Sigmoid colon (tissue), 7 donors: ENCODE measurements at regions of chr5 and their contacts with region 1.

Region 1: DNA sequence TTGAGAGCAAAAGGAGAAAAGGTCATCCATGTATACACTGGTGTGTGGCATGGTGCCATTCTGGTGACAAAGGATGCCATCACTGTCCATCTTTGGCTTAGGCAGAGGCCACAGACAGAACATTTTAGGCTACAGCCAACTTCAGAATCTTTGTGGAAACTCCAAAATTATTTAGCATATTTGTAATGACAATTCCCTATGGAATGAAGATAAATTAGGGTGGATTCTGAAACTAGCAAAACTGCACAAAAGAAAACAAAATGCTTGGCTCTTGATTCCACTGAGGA is 92.5 kb downstream of the FBXW11 start:
- DNase-seq: no peak
- H3K4me3 ChIP-seq: no peak overlapping the region
- H3K27ac ChIP-seq: no peak overlapping the region
- H3K4me1 ChIP-seq: peaks cover 0 to 29% (median 18%) of the 10 kb centered on the region in 4 donors
- H3K27me3 ChIP-seq: no peaks in the 10 kb centered on the region
- CTCF ChIP-seq: no peak
- EP300 ChIP-seq: no peak
- POLR2A ChIP-seq: no peak

Region 2: DNA sequence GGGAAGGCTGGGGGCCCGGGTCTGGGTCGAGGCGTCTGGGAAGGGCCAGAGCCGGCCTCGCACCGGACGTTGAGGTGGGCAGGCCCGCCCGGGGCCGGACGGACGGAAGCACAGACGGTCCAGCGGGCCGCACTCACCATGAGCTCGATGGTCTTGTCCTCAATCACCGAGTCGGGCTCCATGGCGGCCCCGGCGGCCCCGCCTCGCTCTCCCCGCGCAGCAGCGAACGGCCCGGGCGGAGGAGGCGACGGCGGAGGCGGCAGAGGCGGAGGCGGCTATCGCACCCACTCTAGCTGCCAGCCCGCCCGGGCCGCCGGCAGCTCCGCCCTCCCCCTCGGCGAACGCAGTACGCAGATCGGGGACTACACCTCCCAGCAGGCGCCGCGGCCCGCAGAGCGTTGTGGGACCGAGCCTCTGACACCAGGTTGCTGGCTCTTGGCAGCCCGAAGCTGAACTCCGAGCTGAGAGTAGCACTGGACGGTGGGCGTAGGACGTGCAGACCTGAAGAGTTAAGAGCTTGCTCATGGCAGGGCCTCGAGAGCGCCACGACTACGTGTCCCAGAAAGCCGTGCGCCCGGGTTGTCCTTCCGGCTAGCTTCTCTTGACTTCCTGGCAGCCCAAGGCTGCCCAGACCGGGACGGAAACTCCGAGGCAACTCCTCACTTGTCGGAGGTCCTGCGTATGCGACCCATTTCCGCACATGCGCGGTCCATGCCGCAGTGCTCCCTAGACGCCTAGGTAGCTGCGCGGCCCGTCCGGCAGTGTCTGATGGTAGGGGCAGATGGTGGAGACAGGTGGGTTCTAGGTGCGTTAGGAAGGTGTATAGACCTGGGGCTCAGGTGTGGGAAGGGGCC is 92.6 kb after region 1 on chr5 and contains the start of gene FBXW11:
- intact Hi-C with region 1: loop called (anchors 5 kb)
- DNase-seq: peak; percentile 99
- H3K4me3 ChIP-seq: peak within 1 kb of the TSS; percentile 79 to 99 (median 96)
- H3K27ac ChIP-seq: peak within 1 kb of the TSS; percentile 92 to 99 (median 98)
- H3K4me1 ChIP-seq: peaks cover 0 to 46% (median 40%) of the 10 kb centered on the region in 4 donors
- H3K27me3 ChIP-seq: no peaks in the 10 kb centered on the region
- CTCF ChIP-seq: no peak
- EP300 ChIP-seq: no peak
- POLR2A ChIP-seq: peak; percentile 77 to 79
- total RNA-seq, gene FBXW11: 42.9 to 67.1 (median 49.4) TPM

Region 3: DNA sequence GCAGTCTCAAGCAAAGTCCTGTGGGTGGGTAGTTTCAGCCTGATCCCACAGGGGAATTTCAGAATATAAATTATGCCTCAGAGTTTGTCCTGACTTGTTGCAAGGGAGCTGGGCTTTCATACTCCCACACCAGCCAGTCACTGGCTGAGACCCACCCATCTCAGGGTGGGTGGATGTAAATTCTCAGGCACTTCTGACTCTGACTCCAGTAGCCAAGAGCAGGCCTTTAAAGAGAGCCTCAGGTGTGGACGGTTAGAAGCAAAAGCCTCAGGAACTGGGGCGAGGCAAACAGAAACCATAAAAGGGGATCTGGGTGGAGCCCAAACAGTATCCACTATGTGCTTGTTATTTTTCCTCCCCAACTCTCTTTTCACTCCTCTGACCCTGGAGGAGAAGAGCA is 121.1 kb after region 1 on chr5:
- intact Hi-C with region 1: loop called (anchors 1 kb)
- DNase-seq: no peak
- H3K4me3 ChIP-seq: no peak overlapping the region
- H3K27ac ChIP-seq: no peak overlapping the region
- H3K4me1 ChIP-seq: no peaks in the 10 kb centered on the region
- H3K27me3 ChIP-seq: no peaks in the 10 kb centered on the region
- CTCF ChIP-seq: no peak
- EP300 ChIP-seq: no peak
- POLR2A ChIP-seq: no peak

Region 4: DNA sequence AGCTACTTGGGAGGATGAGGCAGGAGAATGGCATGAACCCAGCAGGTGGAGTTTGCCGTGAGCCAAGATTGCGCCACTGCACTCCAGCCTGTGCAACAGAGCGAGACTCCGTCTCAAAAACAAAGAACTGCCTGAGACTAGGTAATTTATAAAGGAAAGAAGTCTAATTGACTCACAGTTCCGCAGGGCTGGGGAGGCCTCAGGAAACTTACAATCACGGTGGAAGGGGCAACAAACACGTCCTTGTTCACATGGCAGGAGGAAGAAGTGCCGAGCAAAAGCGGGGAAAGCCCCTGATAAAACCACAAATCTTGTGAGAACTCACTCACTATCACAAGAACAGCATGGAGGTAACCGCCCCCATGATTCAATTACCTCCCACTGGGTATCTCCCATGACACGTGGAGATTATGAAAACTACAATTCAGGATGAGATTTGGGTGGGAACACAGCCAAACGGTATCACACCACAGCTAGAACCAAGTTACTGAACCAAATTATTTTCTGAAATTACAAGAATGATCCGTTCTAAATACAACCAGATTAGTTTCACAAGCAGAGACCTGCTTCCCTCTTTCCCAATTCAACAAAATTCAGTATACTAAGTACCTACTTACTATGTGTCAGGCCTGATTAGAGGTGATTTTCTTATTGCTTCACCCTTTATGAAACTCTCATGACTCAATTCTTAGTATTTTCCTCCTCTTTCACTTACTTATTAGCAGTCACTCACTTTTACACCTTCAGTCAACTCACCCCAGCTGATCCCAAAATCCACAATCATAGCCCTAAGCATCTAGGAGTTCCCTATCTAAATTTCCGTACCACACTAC is 361.2 kb after region 1 on chr5:
- intact Hi-C with region 1: no loop called
- DNase-seq: no peak
- H3K4me3 ChIP-seq: no peak overlapping the region
- H3K27ac ChIP-seq: no peak overlapping the region
- H3K4me1 ChIP-seq: peaks cover 0 to 4% (median 0%) of the 10 kb centered on the region in 4 donors
- H3K27me3 ChIP-seq: no peaks in the 10 kb centered on the region
- CTCF ChIP-seq: no peak
- EP300 ChIP-seq: no peak
- POLR2A ChIP-seq: no peak